Heart right ventricle (tissue), 16 donors: ENCODE measurements at regions of chr3 and their contacts with region 1.

Region 1: DNA sequence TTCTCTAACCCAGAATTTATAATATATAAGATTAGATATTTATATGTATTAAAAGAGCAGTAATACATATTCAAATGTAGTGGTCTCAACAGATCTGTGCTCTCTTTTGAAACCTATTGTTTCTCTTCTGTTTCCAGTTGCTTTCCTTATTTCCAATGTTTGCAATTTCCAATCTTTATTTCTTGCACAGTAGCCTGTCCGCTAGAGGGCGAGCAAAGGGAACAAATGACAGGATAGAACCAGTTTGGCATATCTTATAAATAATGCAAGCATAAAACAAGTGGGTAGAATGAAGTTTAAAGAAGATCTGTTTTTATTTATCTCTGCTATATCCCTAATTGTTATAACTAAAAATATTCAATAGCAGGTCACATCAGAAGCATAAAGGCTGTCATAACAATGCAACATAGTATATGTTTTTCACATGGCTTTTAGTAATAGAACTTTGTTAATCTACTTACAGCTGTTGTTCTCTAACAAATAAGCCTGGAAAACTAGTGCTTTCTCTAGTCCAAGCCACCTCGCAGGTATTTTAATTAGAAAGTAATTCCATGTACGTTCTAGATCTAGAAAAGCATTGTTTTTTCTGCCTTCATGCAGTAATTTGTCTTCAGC is 15.1 kb upstream of the TCAIM start:
- DNase-seq: peak; percentile 21 to 69
- ATAC-seq: peak in 3 of 8 donors; percentile 33 to 48 (median 45)
- H3K4me3 ChIP-seq: no peak overlapping the region
- H3K27ac ChIP-seq: no peak overlapping the region
- H3K4me1 ChIP-seq: no peaks in the 10 kb centered on the region
- H3K27me3 ChIP-seq: peaks cover 0 to 4% (median 0%) of the 10 kb centered on the region in 7 donors
- CTCF ChIP-seq: peak; percentile 64 to 88 (median 79)

Region 2: DNA sequence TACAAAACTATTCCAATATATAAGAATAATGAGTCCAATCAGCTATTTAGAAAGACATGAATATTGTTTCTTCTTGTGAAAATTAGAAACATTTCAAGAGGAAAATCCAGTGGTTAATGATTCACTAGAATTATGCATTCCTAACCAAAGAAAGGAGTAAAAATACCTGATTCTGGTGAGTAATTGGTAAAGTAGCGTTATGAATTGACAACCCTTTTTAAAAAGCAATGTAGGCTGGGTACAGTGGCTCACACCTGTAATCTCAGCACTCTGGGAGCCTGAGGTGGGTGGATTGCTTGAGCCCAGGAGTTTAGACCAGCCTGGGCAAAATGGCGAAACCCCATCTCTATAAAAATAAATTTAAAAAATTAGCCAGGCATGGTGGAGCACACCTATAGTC is 38.5 kb before region 1 on chr3:
- intact Hi-C with region 1: no loop called
- DNase-seq: no peak
- ATAC-seq: no peak
- H3K4me3 ChIP-seq: no peak overlapping the region
- H3K27ac ChIP-seq: no peak overlapping the region
- H3K4me1 ChIP-seq: no peaks in the 10 kb centered on the region
- H3K27me3 ChIP-seq: peaks cover 0 to 28% (median 7%) of the 10 kb centered on the region in 7 donors
- CTCF ChIP-seq: no peak

Region 3: DNA sequence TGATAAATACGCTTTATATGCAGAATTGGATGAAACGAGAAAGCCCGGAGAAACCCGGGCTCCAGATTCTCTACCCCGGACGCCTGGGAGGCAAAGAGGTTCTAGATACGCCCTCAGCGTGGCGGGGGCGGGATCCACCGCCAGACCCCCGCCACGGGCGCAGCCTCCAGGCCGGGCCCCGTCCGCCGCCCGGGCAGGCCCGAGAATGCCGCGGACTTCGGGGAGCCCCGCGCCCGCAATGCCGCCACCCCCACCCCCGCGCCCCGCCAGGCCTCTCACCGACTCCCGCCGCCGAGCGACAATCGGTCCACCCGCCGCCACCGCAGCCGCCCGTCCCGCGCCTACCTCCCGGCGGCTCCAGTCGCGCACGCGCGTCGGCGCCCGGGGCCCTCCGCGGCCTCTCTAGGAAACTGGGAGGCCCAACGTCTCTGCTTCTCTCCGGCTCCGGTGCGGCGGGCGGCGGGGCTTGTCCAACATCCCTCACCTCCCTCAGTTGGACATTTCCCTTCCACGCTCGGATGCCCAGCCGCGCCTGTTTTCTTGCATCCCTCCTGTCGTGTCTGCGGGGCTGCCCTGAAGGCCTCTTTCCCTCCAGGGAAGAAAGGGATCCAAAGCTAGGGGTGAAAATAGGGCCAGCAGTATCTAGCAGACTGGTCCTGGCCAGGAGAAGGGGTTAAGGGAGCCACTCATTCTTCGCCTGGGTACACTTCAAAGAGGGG is 154.0 kb after region 1 on chr3 and contains the start of gene ZNF445:
- intact Hi-C with region 1: loop called in 3 of 10 experiments (anchors 5 to 10 kb)
- DNase-seq: peak; percentile 78 to 84
- ATAC-seq: peak; percentile 94 to 99 (median 98)
- H3K4me3 ChIP-seq: peak within 1 kb of the TSS; percentile 62 to 88 (median 80)
- H3K27ac ChIP-seq: peak within 1 kb of the TSS in 9 of 10 donors; percentile 53 to 87 (median 78)
- H3K4me1 ChIP-seq: peaks cover 0 to 38% (median 16%) of the 10 kb centered on the region in 9 donors
- H3K27me3 ChIP-seq: no peaks in the 10 kb centered on the region
- CTCF ChIP-seq: no peak
- total RNA-seq, gene ZNF445: 11.3 to 18.6 (median 15.7) TPM

Region 4: GRCh38 chr3:44510000-44510368 is 186.5 kb after region 1 on chr3:
- intact Hi-C with region 1: loop called in 4 of 10 experiments (anchors 2 to 10 kb)
- DNase-seq: no peak
- ATAC-seq: no peak
- H3K4me3 ChIP-seq: peak overlapping the region; percentile 73 to 98 (median 87)
- H3K27ac ChIP-seq: peak overlapping the region; percentile 41 to 96 (median 92)
- H3K4me1 ChIP-seq: peaks cover 4 to 23% (median 18%) of the 10 kb centered on the region in 9 donors
- H3K27me3 ChIP-seq: no peaks in the 10 kb centered on the region
- CTCF ChIP-seq: no peak

Region 5: DNA sequence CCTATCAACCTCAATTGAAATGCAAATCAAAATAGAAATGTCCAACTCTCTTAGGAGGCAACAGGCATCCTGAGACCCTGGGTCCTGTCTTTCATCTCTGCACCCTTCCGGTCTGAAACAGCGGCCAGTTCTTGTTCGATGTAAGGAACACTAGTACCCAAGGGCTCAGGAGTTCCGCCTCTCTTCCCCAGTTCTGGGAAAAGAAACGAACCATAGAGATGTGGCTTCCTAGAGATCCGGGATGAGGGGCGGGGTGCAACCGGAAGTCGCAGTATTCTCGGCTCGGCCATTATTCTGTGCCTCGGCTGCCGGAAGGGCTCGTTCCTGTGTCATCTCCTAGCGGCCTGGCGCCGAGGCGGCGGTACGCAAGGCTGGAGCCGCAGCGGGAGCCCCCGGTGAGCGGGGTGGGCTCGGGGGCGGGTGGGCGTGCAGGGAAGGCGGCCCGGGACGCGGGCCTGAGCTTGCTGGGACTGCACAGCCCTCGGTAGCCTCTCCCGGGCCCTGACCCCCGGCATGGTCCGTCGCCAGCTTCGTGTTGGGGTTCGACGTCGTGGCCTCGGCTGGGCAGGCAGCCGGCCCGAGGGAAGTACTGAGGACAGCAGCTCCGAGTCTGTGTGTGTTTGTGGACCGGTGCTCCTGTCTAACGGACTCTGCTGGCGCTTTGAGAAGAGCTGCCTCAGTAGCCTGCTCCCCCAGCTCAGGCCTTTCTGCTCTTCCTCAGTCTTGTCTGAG is 301.5 kb after region 1 on chr3 and contains the start of gene ZNF197:
- intact Hi-C with region 1: loop called in 1 of 10 experiments (anchors 5 kb)
- DNase-seq: peak; percentile 82 to 91
- ATAC-seq: peak; percentile 97 to 99 (median 98)
- H3K4me3 ChIP-seq: peak within 1 kb of the TSS; percentile 67 to 98 (median 88)
- H3K27ac ChIP-seq: peak within 1 kb of the TSS; percentile 84 to 98 (median 93)
- H3K4me1 ChIP-seq: peaks cover 0 to 41% (median 27%) of the 10 kb centered on the region in 9 donors
- H3K27me3 ChIP-seq: no peaks in the 10 kb centered on the region
- CTCF ChIP-seq: peak in 4 of 9 donors; percentile 27 to 47 (median 42)
- total RNA-seq, gene ZNF197: 11.2 to 14.8 (median 12.9) TPM

Region 6: DNA sequence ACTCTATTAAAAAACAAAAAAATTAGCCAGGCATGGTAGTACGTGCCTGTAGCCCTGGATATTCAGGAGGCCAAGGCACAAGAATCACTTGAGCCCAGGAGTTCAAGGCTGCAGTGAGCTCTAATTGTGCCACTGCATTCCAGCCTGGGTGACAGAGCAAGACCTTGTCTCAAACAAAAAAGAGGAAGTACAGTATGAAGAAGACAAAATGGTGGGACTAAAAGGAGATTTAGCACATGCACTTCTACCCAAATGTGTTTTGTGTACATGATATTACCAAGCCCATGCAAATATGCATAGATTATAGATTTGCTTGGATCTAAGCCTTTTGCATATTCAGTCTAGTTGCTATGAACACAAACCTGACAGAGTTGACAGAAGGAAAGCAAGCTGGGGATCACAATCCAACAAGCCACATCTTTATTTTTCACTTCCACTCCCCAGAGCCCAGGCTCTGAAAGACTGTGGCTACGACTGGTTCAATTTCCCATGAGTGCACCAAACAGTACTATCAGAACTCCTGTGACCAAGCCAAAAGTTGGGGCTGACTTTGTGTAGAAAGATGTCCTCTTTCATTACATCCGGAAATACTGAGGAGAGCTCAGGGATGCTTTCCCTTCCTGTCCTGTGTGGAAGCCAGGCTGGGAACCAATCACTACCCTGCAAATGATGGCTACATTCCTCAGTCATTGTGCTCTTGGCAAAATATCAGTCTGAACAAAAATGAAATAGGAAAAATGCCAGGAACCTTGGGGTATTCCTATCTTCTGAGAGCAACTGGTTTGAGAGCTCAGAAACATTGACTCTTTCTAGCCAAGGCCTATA is 600.4 kb after region 1 on chr3:
- intact Hi-C with region 1: loop called in 1 of 10 experiments (anchors 10 kb)
- DNase-seq: no peak
- ATAC-seq: peak in 1 of 8 donors; percentile 36
- H3K4me3 ChIP-seq: no peak overlapping the region
- H3K27ac ChIP-seq: peak overlapping the region in 1 of 10 donors; percentile 9
- H3K4me1 ChIP-seq: peaks cover 0 to 17% (median 10%) of the 10 kb centered on the region in 9 donors
- H3K27me3 ChIP-seq: no peaks in the 10 kb centered on the region
- CTCF ChIP-seq: no peak